Astrocyte of the cerebellum (primary cell): ENCODE measurements at regions of chr7 and their contacts with region 1.

Region 1: GRCh38 chr7:25552998-25553397 is 324.7 kb upstream of the NPVF start:
- DNase-seq: no peak
- H3K4me3 ChIP-seq: no peak overlapping the region
- CTCF ChIP-seq: no peak

Region 2: GRCh38 chr7:25500393-25500921 is 52.5 kb before region 1 on chr7:
- in situ Hi-C with region 1: loop called (anchors 5 kb)
- DNase-seq: no peak
- H3K4me3 ChIP-seq: no peak overlapping the region
- CTCF ChIP-seq: no peak